ENCODE measurements at regions of chr12 and their contacts with region 1.

Region 1: DNA sequence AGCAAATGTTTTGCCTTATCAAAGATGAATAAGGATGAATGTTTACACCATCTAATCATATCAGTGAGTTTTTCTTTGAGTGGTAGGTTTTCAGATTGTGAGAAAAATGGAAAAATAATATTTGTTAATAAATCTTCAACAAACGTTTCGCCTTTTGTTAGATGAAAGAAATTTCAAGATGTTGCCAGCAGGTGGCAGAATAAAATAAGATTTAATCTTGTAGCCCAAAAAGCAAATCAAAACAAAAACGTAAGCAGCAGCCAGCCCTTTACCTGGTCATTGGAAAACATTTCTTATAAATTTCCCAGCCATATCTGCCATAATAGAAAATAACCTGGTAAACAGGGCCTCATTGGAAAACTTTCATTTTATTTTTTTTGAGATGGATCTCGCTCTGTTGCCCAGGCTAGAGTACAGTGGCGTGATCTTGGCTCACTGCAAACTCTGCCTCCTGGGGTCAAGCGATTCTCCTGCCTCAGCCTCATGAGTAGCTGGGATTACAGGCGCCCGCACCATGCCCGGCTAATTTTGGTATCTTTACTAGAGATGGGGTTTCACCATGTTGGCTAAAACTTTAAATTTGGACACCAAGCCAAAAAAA is 15.4 kb upstream of the TMEM120B start:
- DNase-seq: peak; percentile 51
- H3K4me3 ChIP-seq: peak overlapping the region in 1 of 2 experiments; percentile 17; a peak in 1 of 4 replicates
- H3K27ac ChIP-seq: peak overlapping the region in 1 of 2 experiments; percentile 13; a peak in 1 of 4 replicates
- H3K4me1 ChIP-seq: no peaks in the 10 kb centered on the region
- H3K27me3 ChIP-seq: no peaks in the 10 kb centered on the region
- CTCF ChIP-seq: peak; percentile 70
- EP300 ChIP-seq: no peak
- RAD21 ChIP-seq: peak; percentile 80

Region 2: DNA sequence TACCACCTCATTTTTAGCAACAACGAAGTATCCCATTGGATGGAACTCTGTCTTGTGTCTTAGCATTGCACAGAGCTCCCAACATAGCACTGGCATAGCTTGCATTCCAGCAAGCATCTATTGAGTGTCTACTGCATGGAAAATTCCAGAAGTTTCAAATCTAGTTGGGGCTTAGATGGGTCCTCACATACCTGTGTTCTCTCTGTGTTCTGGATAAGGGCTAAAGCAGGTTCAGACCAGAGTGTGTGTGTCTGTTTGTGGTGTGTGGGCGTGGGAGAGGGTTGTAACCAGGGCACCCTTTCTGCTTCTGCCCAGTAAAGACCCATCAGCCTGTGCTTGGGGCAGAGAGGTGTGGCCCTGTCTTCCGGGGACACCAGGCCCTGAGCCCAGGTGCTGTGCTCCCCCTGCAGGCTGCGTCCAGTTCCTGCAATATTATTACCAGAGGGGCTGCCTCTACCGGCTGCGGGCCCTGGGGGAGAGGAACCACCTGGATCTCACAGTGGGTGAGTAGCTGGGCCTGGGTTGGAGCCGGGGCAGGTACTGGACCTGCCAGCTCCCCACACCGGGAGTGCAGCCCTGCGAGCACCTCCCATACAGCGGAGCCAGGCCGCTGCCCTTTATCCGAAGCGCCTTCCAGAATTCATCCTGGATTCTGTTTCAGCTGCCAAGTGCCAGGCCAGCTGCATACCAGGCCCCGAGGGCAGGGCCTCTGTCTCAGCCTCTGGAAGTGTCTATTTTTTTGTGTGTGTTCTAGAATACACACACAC is 76.0 kb after region 1 on chr12:
- CTCF ChIA-PET with region 1: interaction called, 69 read pairs
- POLR2A ChIA-PET with region 1: interaction called, 3 read pairs
- DNase-seq: peak; percentile 91
- H3K4me3 ChIP-seq: no peak overlapping the region; a peak in 1 of 4 replicates
- H3K27ac ChIP-seq: peak overlapping the region in 1 of 2 experiments; percentile 45; a peak in 1 of 4 replicates
- H3K4me1 ChIP-seq: peaks cover 0 to 12% of the 10 kb centered on the region in 2 experiments; a peak in 1 of 4 replicates
- H3K27me3 ChIP-seq: no peaks in the 10 kb centered on the region
- CTCF ChIP-seq: peak; percentile 89
- EP300 ChIP-seq: 0 out of 4 replicates have a peak, but pooled peaks of 1 of the 2 experiments have one; percentile 12
- RAD21 ChIP-seq: peak; percentile 88

Region 3: GRCh38 chr12:122203301-122204166 is 506.3 kb after region 1 on chr12 and contains the start of gene B3GNT4:
- CTCF ChIA-PET with region 1: no interaction called
- POLR2A ChIA-PET with region 1: no interaction called
- DNase-seq: peak; percentile 85
- H3K4me3 ChIP-seq: peak within 1 kb of the TSS; percentile 55 to 69
- H3K27ac ChIP-seq: peak within 1 kb of the TSS in 1 of 2 experiments; percentile 39; a peak in 1 of 4 replicates
- H3K4me1 ChIP-seq: peaks cover 0 to 27% of the 10 kb centered on the region in 2 experiments; a peak in 2 of 4 replicates
- H3K27me3 ChIP-seq: no peaks in the 10 kb centered on the region
- CTCF ChIP-seq: no peak
- EP300 ChIP-seq: no peak
- RAD21 ChIP-seq: no peak
- polyA plus RNA-seq, gene B3GNT4: 0.81 and 0.84 TPM in 2 replicates

Region 4: DNA sequence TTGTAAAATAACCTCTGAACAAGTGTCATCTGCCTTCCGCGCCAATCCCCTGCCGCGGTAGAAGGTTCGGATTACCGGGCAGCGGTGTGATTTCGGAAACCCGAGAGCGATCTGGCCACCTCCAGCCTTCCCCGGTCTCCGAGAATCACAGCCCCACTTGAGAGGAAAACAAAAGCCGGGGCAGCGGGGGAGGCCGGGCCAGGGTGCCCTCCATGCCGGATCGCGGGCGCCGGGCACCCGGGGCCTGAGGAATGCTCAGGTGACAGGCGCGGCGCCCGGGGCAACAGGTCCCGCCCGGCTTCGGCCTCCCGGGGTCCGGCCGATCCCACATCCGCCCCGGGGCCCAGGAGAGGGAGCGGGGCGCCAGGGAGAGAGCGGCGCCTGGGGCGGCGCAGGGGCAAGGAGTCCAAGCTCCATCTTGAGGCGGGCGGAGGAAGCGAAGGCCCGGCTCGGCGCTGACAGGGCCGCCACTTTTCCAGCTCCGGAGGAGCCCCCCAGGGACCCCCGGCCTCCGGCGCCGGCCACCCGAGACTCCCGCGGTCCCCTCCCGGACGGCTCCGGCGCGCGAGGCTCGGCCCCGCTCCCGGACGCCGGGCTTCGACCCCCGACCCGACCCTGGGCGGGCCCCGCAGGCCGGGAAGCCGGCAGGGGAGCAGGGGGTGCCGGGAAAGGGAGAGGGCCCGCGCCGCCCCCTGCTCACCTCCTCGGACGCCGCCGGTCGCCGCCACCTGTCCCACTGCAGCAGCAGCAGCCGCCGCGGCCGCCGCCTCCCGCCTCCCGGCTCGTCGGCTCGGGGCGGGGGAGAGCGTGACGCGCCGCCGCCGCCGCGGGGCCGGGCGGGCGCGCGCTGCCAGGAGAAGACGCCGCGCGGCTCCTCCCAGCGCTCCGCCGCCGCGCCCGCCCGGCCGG is 724.9 kb after region 1 on chr12 and contains the start of gene CLIP1:
- CTCF ChIA-PET with region 1: no interaction called
- POLR2A ChIA-PET with region 1: no interaction called
- DNase-seq: peak; percentile 87
- H3K4me3 ChIP-seq: peak within 1 kb of the TSS; percentile 67 to 79
- H3K27ac ChIP-seq: peak within 1 kb of the TSS; percentile 77 to 94
- H3K4me1 ChIP-seq: peaks cover 11 to 15% of the 10 kb centered on the region in 2 experiments; a peak in 2 of 4 replicates
- H3K27me3 ChIP-seq: no peaks in the 10 kb centered on the region
- CTCF ChIP-seq: peak; percentile 47
- EP300 ChIP-seq: no peak
- RAD21 ChIP-seq: peak; percentile 36
- polyA plus RNA-seq, gene CLIP1: 33.9 and 48.9 TPM in 2 replicates

Measured in SK-N-SH (cell line).